Heart right ventricle (tissue), 16 donors: ENCODE measurements at regions of chr11 and their contacts with region 1.

Region 1: GRCh38 chr11:36292311-36292722 is 3.1 kb upstream of the COMMD9 start:
- DNase-seq: no peak
- ATAC-seq: no peak
- H3K4me3 ChIP-seq: no peak overlapping the region
- H3K27ac ChIP-seq: no peak overlapping the region
- H3K4me1 ChIP-seq: peaks cover 0 to 20% (median 13%) of the 10 kb centered on the region in 9 donors
- H3K27me3 ChIP-seq: no peaks in the 10 kb centered on the region
- CTCF ChIP-seq: peak in 8 of 9 donors; percentile 15 to 63 (median 54)

Region 2: DNA sequence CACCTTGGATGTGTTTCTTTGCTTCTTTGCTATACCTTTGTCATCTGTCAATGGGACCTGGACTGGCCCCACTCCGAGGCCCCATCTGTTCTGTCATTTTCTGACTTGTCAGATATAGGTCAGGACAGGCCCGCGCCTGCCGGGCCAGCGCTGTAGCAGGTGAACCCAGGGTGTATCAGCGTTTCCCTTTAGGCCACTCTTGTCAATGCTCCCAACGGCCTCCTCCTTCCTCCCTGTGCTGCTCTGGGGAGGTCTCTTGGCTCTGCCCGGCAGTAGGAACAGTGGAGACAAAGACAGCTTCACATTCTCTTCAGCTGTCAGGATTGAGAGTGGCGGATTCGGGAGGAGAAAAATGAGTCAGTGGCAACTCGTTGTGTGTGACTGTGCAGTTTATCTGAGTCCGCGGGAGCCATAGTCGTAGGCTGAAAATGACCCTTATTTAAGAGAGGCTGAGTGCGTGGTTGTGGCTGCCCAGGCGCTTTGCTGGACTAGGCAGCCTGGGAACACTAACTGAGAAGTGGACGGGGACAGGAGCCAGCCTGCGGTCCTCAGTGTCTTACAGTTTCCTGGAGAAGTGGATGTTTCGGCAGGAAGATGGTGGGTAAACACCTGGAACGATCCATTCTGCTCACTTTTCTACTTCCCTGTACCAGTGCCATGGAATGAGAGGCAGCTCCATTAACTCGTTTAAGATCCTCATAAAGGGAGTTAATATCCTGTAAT is 106.1 kb after region 1 on chr11:
- intact Hi-C with region 1: no loop called
- DNase-seq: no peak
- ATAC-seq: no peak
- H3K4me3 ChIP-seq: no peak overlapping the region
- H3K27ac ChIP-seq: peak overlapping the region in 1 of 10 donors; percentile 10
- H3K4me1 ChIP-seq: peaks cover 0 to 33% (median 13%) of the 10 kb centered on the region in 9 donors
- H3K27me3 ChIP-seq: no peaks in the 10 kb centered on the region
- CTCF ChIP-seq: no peak

Region 3: GRCh38 chr11:36499315-36499714 is 207.0 kb after region 1 on chr11:
- intact Hi-C with region 1: loop called in 3 of 10 experiments (anchors 5 kb)
- DNase-seq: no peak
- ATAC-seq: no peak
- H3K4me3 ChIP-seq: no peak overlapping the region
- H3K27ac ChIP-seq: peak overlapping the region in 2 of 10 donors; percentile 68 to 78
- H3K4me1 ChIP-seq: peaks cover 8 to 51% (median 42%) of the 10 kb centered on the region in 9 donors
- H3K27me3 ChIP-seq: no peaks in the 10 kb centered on the region
- CTCF ChIP-seq: no peak